ENCODE measurements at regions of chr7 and their contacts with region 1.

Region 1: DNA sequence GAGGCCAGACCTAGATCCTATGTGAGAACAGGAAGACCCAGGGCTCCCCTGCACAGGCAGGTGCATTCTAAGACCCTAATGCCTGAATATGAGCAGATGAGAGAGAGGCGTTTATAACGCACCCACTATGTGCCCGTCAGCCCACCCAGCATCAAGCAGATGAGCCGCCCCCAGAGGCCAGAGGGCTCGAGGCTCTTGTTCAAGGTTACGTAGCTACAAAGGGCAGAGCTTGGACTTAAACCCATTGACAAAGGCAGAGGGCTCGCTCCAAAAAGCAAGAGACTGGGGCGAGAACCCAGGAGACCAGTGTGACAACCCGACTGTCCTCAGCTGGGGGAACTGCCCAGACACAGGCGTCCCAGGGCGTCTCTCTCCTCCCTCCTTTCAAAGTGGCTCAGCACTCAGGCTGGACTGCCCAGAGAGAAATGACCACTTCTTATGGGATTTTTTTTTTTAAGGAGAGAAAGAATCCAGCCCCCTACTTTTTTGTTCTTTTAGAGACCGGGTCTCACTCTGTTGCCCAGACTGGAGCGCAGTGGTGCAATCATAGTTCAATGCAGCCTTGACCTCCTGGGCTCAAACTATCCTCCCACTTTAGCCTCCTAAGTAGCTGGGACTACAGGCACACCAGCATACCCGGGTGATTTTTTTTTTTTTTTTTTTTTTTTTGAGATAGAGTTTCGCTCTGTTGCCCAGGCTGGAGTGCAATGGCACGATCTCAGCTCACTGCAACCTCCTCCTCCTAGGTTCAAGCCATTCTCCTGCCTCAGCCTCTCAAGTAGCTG is 40.1 kb downstream of the TNRC18 start:
- DNase-seq: no peak
- H3K4me3 ChIP-seq: peak overlapping the region in 1 of 4 donors; percentile 22
- H3K27ac ChIP-seq: peak overlapping the region; percentile 1 to 70 (median 56)
- H3K4me1 ChIP-seq: peaks cover 0 to 91% (median 80%) of the 10 kb centered on the region in 4 donors
- H3K27me3 ChIP-seq: no peaks in the 10 kb centered on the region
- CTCF ChIP-seq: no peak
- EP300 ChIP-seq: no peak
- POLR2A ChIP-seq: no peak

Region 2: GRCh38 chr7:5406957-5407945 is 23.7 kb after region 1 on chr7:
- intact Hi-C with region 1: loop called (anchors 1 kb)
- DNase-seq: no peak
- H3K4me3 ChIP-seq: no peak overlapping the region
- H3K27ac ChIP-seq: peak overlapping the region; percentile 50 to 100 (median 62)
- H3K4me1 ChIP-seq: peaks cover 0 to 65% (median 58%) of the 10 kb centered on the region in 4 donors
- H3K27me3 ChIP-seq: no peaks in the 10 kb centered on the region
- CTCF ChIP-seq: no peak
- EP300 ChIP-seq: no peak
- POLR2A ChIP-seq: no peak